ENCODE measurements at regions of chr20 and their contacts with region 1.

Region 1: GRCh38 chr20:10476319-10476724 is 41.2 kb downstream of the SLX4IP start:
- DNase-seq: peak; percentile 60
- ATAC-seq: peak; percentile 86
- H3K4me3 ChIP-seq: no peak overlapping the region
- H3K27ac ChIP-seq: peak overlapping the region; percentile 49; the same call in 1 of the 2 replicates
- H3K4me1 ChIP-seq: peaks cover 37% of the 10 kb centered on the region
- H3K27me3 ChIP-seq: no peaks in the 10 kb centered on the region
- CTCF ChIP-seq: peak; percentile 31 to 74 (median 45); a peak in 4 of 6 replicates
- EP300 ChIP-seq: peak; percentile 74 to 90; a peak in 3 of 4 replicates
- POLR2A ChIP-seq: no peak
- RAD21 ChIP-seq: peak; percentile 84

Region 2: GRCh38 chr20:10316582-10316981 is 159.7 kb before region 1 on chr20:
- CTCF ChIA-PET with region 1: interaction called, 29 read pairs
- POLR2A ChIA-PET with region 1: no interaction called
- RAD21 ChIA-PET with region 1: interaction called, 21 read pairs
- SMC1A ChIA-PET with region 1: interaction called, 32 read pairs
- in situ Hi-C with region 1: no loop called
- intact Hi-C with region 1: no loop called
- DNase-seq: peak; percentile 9
- ATAC-seq: peak; percentile 63
- H3K4me3 ChIP-seq: no peak overlapping the region
- H3K27ac ChIP-seq: no peak overlapping the region
- H3K4me1 ChIP-seq: no peaks in the 10 kb centered on the region
- H3K27me3 ChIP-seq: peaks cover 0 to 2% of the 10 kb centered on the region in 2 experiments; a peak in 2 of 4 replicates
- CTCF ChIP-seq: peak; percentile 35 to 52 (median 40); a peak in 4 of 6 replicates
- EP300 ChIP-seq: no peak
- POLR2A ChIP-seq: no peak
- RAD21 ChIP-seq: peak; percentile 34

Region 3: DNA sequence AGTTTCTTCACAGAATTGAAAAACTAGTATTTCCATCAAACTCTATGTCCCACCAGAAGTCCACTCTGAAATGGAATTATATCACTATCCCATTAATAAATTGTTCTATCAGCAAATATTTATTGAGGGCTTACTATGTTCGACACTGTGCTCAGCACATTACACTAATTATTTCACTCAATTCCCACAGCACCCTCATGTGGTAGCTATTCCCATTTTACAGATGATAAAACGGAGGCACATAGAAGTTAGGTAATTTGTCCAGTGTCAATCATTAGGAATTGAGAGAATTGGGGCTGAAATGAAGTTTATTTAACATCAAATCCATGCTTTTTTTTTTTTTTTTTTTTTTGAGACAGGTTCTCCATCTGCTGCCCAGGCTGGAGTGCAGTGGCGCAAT is 94.8 kb before region 1 on chr20:
- CTCF ChIA-PET with region 1: interaction called, 13 read pairs
- POLR2A ChIA-PET with region 1: no interaction called
- RAD21 ChIA-PET with region 1: interaction called, 7 read pairs
- SMC1A ChIA-PET with region 1: interaction called, 4 read pairs
- in situ Hi-C with region 1: no loop called
- intact Hi-C with region 1: no loop called
- DNase-seq: no peak
- ATAC-seq: peak; percentile 87
- H3K4me3 ChIP-seq: no peak overlapping the region
- H3K27ac ChIP-seq: no peak overlapping the region
- H3K4me1 ChIP-seq: no peaks in the 10 kb centered on the region
- H3K27me3 ChIP-seq: no peaks in the 10 kb centered on the region
- CTCF ChIP-seq: peak in 1 of 3 experiments; percentile 19; a peak in 2 of 6 replicates
- EP300 ChIP-seq: no peak
- POLR2A ChIP-seq: no peak
- RAD21 ChIP-seq: no peak

Region 4: GRCh38 chr20:10434832-10435812 is 41.2 kb before region 1 on chr20 and contains the start of gene SLX4IP:
- CTCF ChIA-PET with region 1: interaction called, 52 read pairs
- POLR2A ChIA-PET with region 1: interaction called, 53 read pairs
- RAD21 ChIA-PET with region 1: interaction called, 47 read pairs
- SMC1A ChIA-PET with region 1: interaction called, 72 read pairs
- in situ Hi-C with region 1: no loop called
- intact Hi-C with region 1: loop called (anchors 1 kb)
- DNase-seq: peak; percentile 88
- ATAC-seq: peak; percentile 75
- H3K4me3 ChIP-seq: peak within 1 kb of the TSS; percentile 97
- H3K27ac ChIP-seq: peak within 1 kb of the TSS; percentile 87
- H3K4me1 ChIP-seq: peaks cover 15% of the 10 kb centered on the region; the same call in 1 of the 2 replicates
- H3K27me3 ChIP-seq: no peaks in the 10 kb centered on the region
- CTCF ChIP-seq: no peak
- EP300 ChIP-seq: no peak
- POLR2A ChIP-seq: peak; percentile 81
- RAD21 ChIP-seq: no peak
- polyA plus RNA-seq, gene SLX4IP: 3.0 to 8.0 TPM

Region 5: DNA sequence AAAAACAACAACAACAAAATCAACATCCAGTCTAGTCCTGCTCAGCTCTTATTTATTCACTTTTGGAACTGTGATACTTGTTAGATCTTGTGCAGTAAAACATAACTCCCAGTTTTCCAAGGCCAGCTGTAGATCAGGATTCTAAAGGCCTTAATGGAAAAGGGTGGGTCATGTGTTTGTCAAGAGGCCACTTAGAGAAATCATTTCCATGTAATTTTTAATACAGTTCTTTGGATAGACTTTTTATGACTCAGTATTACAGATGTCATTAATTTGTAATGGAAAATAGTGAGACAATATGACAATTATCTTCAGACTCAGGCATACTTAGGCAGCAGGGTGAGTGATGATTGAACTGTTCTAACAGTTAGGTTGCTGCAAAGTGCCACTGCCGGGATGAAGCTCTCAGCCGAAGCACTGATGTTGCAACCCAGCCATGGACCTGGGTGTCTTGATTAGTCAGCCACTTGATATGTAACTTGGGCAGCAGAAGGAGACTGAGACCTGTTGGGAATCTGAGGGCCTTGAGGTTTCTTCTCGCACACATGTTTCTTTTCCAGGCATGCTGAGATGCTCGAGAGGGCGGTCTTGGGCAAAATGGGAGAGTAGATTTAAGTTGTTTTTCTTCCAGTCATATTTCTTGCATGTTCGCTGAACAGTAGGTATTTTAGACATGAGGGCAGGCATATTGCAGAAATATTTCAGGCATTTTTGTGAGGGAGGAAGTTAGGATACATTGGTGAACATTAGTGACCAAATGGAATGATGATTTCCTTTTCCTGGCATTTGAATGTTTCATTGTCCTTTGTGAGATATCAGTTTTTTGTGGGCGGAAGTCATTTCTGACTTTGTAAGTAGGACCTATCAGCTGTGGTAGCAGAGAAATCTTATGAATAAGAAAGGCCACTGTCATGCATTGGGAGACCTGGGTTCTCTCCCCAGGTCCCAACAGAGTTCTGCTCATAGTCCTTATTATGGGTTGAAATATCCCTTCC is 11.1 kb after region 1 on chr20:
- CTCF ChIA-PET with region 1: interaction called, 9 read pairs
- POLR2A ChIA-PET with region 1: interaction called, 4 read pairs
- RAD21 ChIA-PET with region 1: interaction called, 7 read pairs
- SMC1A ChIA-PET with region 1: interaction called, 12 read pairs
- in situ Hi-C with region 1: no loop called
- intact Hi-C with region 1: no loop called
- DNase-seq: no peak
- ATAC-seq: no peak
- H3K4me3 ChIP-seq: no peak overlapping the region
- H3K27ac ChIP-seq: no peak overlapping the region
- H3K4me1 ChIP-seq: no peaks in the 10 kb centered on the region
- H3K27me3 ChIP-seq: no peaks in the 10 kb centered on the region
- CTCF ChIP-seq: no peak
- EP300 ChIP-seq: no peak
- POLR2A ChIP-seq: no peak
- RAD21 ChIP-seq: no peak

Region 6: DNA sequence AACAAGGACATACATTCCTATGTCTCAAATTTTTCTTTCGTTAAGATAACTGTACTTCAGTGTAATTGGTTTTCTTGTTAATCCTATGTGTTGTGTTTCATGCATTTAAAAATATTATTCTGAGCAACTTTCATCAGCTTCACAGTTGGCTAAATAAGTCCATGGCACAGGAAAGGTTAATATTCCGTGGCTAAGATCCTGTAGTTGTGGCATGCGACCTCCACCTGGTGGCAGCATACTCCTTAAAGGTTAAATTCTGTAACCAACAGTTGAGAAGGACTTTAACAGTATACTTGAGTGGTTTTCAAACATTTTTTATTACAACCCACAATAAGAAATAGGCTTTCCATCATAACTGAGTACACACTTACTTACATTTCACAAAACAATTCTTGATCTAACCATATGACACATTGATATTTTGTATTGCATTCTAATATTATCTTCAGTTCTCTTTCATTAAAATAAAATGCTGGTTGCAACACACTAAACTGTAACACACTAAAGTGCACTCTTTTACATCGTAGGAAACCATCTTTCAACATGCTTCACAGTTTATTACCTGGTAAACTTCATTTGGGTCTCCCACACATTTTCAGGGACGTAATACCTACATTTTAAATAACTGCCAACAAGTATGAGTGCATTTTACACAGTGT is 77.1 kb after region 1 on chr20:
- CTCF ChIA-PET with region 1: interaction called, 16 read pairs
- POLR2A ChIA-PET with region 1: interaction called, 10 read pairs
- RAD21 ChIA-PET with region 1: interaction called, 22 read pairs
- SMC1A ChIA-PET with region 1: interaction called, 19 read pairs
- in situ Hi-C with region 1: no loop called
- intact Hi-C with region 1: no loop called
- DNase-seq: no peak
- ATAC-seq: peak; percentile 77
- H3K4me3 ChIP-seq: no peak overlapping the region
- H3K27ac ChIP-seq: no peak overlapping the region
- H3K4me1 ChIP-seq: peaks cover 30% of the 10 kb centered on the region
- H3K27me3 ChIP-seq: no peaks in the 10 kb centered on the region
- CTCF ChIP-seq: peak; percentile 76 to 85 (median 83)
- EP300 ChIP-seq: no peak
- POLR2A ChIP-seq: no peak
- RAD21 ChIP-seq: peak; percentile 94

Region 7: GRCh38 chr20:10636326-10636818 is 160.1 kb after region 1 on chr20:
- CTCF ChIA-PET with region 1: no interaction called
- POLR2A ChIA-PET with region 1: no interaction called
- RAD21 ChIA-PET with region 1: no interaction called
- SMC1A ChIA-PET with region 1: no interaction called
- in situ Hi-C with region 1: no loop called
- intact Hi-C with region 1: no loop called
- DNase-seq: no peak
- ATAC-seq: no peak
- H3K4me3 ChIP-seq: no peak overlapping the region
- H3K27ac ChIP-seq: no peak overlapping the region
- H3K4me1 ChIP-seq: no peaks in the 10 kb centered on the region
- H3K27me3 ChIP-seq: no peaks in the 10 kb centered on the region
- CTCF ChIP-seq: no peak
- EP300 ChIP-seq: no peak
- POLR2A ChIP-seq: no peak
- RAD21 ChIP-seq: no peak

Region 8: GRCh38 chr20:11267131-11267761 is 790.9 kb after region 1 on chr20:
- CTCF ChIA-PET with region 1: no interaction called
- POLR2A ChIA-PET with region 1: interaction called, 3 read pairs
- RAD21 ChIA-PET with region 1: interaction called, 7 read pairs
- SMC1A ChIA-PET with region 1: interaction called, 9 read pairs
- in situ Hi-C with region 1: no loop called
- intact Hi-C with region 1: loop called (anchors 10 kb)
- DNase-seq: peak; percentile 79
- ATAC-seq: peak; percentile 93
- H3K4me3 ChIP-seq: no peak overlapping the region
- H3K27ac ChIP-seq: peak overlapping the region; percentile 37; the same call in 1 of the 2 replicates
- H3K4me1 ChIP-seq: peaks cover 15% of the 10 kb centered on the region
- H3K27me3 ChIP-seq: no peaks in the 10 kb centered on the region
- CTCF ChIP-seq: no peak
- EP300 ChIP-seq: peak; percentile 71 to 83
- POLR2A ChIP-seq: no peak
- RAD21 ChIP-seq: peak; percentile 45; the same call in 1 of the 2 replicates